ENCODE measurements at regions of chr9 and their contacts with region 1.

Region 1: GRCh38 chr9:137029058-137029936 is 1.3 kb upstream of the ABCA2 start:
- DNase-seq: peak in 1 of 2 experiments; percentile 86
- H3K4me3 ChIP-seq: no peak overlapping the region; the same call in 1 of the 2 replicates
- H3K27ac ChIP-seq: no peak overlapping the region
- H3K4me1 ChIP-seq: peaks cover 8% of the 10 kb centered on the region; the same call in 1 of the 2 replicates
- H3K27me3 ChIP-seq: no peaks in the 10 kb centered on the region
- CTCF ChIP-seq: peak; percentile 86

Region 2: GRCh38 chr9:136799854-136800657 is 229.2 kb before region 1 on chr9:
- CTCF ChIA-PET with region 1: no interaction called
- POLR2A ChIA-PET with region 1: interaction called, 13 read pairs
- intact Hi-C with region 1: no loop called
- DNase-seq: peak; percentile 81 to 91
- H3K4me3 ChIP-seq: peak overlapping the region; percentile 69
- H3K27ac ChIP-seq: no peak overlapping the region
- H3K4me1 ChIP-seq: peaks cover 21% of the 10 kb centered on the region
- H3K27me3 ChIP-seq: no peaks in the 10 kb centered on the region
- CTCF ChIP-seq: no peak

Region 3: GRCh38 chr9:136820971-136821825 is 208.1 kb before region 1 on chr9:
- CTCF ChIA-PET with region 1: interaction called, 18 read pairs
- POLR2A ChIA-PET with region 1: no interaction called
- intact Hi-C with region 1: no loop called
- DNase-seq: no peak
- H3K4me3 ChIP-seq: no peak overlapping the region
- H3K27ac ChIP-seq: no peak overlapping the region
- H3K4me1 ChIP-seq: no peaks in the 10 kb centered on the region
- H3K27me3 ChIP-seq: no peaks in the 10 kb centered on the region
- CTCF ChIP-seq: no peak

Region 4: DNA sequence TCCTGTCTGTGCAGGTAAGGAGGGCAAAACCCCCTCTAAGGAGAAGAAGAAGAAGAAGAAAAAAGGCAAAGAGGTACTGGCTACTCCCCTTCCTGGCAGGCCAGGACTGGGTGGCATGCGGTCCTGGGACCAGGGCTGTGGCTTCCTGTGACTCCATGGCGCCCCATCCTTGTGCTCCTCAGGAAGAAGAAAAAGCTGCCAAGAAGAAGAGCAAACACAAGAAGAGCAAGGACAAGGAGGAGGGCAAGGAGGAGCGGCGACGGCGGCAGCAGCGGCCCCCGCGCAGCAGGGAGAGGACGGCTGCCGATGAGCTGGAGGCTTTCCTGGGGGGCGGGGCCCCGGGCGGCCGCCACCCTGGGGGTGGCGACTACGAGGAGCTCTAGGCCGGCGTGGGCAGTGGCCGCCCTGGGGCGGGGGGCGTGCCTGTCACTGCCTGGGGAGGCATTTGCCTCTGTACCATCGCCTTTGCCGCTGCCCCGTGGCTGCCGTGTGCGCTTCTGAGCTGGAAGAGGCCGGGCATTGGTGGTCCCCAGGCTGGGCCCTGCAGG is 189.1 kb before region 1 on chr9:
- CTCF ChIA-PET with region 1: no interaction called
- POLR2A ChIA-PET with region 1: interaction called, 14 read pairs
- intact Hi-C with region 1: loop called (anchors 5 kb)
- DNase-seq: peak; percentile 46 to 51
- H3K4me3 ChIP-seq: peak overlapping the region; percentile 35; the same call in 1 of the 2 replicates
- H3K27ac ChIP-seq: no peak overlapping the region
- H3K4me1 ChIP-seq: 0 out of 2 replicates have a peak, but pooled peaks cover 2% of the 10 kb centered on the region
- H3K27me3 ChIP-seq: no peaks in the 10 kb centered on the region
- CTCF ChIP-seq: no peak

Region 5: DNA sequence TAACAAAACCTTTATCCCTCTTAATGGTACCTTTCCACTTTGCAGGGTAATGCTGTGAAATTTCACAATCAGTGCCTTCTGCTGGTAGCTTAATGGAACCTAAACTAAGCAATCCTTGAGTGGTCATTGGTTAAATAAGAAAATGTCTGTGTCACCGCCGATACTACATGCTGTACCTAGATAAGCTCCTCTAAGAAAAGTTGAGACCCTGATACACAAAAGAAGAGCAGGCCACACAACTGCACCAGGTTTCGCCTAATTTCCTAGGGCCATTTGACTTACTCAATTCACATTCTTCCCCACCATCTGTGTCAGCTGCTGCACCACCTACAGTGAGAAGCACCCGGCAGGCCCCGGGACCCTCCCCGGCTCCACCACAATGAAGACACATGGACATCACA is 154.1 kb before region 1 on chr9:
- CTCF ChIA-PET with region 1: no interaction called
- POLR2A ChIA-PET with region 1: no interaction called
- intact Hi-C with region 1: no loop called
- DNase-seq: no peak
- H3K4me3 ChIP-seq: no peak overlapping the region
- H3K27ac ChIP-seq: no peak overlapping the region
- H3K4me1 ChIP-seq: 0 out of 2 replicates have a peak, but pooled peaks cover 5% of the 10 kb centered on the region
- H3K27me3 ChIP-seq: no peaks in the 10 kb centered on the region
- CTCF ChIP-seq: no peak

Region 6: DNA sequence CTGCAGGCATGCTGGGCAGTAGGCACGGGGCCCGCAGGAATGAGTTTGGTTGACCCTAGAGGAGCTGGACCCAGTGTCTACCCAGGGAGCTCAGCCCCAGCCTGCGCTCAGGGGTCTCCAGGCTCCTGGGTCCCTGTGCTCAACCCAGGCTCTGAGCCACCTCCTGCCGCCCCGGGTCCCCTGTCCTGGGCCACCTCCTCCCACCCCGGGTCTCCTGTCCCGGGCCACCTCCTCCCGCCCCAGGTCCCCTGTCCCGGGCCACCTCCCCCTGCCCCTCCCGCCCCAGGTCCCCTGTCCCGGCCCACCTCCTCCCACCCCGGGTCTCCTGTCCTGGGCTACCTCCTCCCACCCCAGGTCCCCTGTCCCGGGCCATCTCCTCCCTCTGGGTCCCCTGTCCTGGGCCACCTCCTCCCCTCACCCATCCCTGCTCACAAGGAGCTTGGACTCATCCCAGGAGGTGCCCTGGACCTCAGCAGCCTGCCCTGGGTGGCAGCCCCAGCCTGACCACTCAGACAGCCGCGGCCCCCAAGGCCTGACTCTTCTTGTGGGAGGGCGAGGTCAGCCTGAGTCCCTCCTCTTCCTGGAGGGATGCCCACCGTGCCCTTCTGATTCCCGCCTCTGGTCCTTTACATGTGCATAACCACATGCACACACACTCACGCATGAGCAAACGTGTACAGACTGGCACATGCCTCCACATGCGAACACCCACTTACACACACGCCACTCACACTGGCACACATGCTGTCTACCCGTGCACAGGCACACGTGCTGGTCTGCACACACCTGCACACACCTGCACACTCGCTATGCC is 74.8 kb before region 1 on chr9:
- CTCF ChIA-PET with region 1: no interaction called
- POLR2A ChIA-PET with region 1: no interaction called
- intact Hi-C with region 1: no loop called
- DNase-seq: no peak
- H3K4me3 ChIP-seq: no peak overlapping the region
- H3K27ac ChIP-seq: no peak overlapping the region
- H3K4me1 ChIP-seq: peaks cover 6% of the 10 kb centered on the region; the same call in 1 of the 2 replicates
- H3K27me3 ChIP-seq: no peaks in the 10 kb centered on the region
- CTCF ChIP-seq: no peak

Region 7: DNA sequence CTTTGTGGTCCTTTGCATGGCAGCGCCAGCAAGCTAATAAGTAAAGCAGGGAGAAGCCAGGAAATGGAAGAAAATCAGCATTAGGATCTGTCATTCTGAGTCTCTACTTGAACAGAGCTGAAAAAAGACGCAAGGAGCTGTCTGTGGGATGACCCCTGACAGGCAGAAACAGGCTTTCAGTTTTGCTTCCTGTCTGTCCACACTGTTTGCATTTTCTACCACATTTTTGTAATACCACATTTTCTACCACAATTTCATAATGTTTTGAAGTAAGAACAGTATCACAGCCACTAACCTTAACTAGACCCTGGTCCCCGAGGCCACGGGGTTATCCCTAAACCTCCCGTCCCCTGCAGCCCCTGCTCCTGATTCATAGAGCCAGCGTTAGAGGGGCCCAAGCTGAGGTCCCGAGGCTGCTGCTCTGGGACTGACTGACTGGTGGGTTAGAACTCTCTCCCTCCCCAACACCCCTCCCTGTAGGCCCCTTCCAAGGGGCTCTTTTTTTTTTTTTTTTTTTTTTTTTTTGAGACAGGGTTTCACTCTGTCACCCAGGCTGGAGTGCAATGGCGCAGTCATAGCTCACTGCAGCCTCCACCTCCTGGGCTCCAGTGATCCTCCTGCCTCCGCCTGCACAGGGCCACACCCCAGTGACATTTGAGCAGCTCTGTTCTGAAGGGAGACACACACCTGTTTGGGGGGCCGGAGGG is 29.0 kb before region 1 on chr9:
- CTCF ChIA-PET with region 1: interaction called, 13 read pairs
- POLR2A ChIA-PET with region 1: no interaction called
- intact Hi-C with region 1: no loop called
- DNase-seq: no peak
- H3K4me3 ChIP-seq: no peak overlapping the region
- H3K27ac ChIP-seq: no peak overlapping the region
- H3K4me1 ChIP-seq: peaks cover 30% of the 10 kb centered on the region
- H3K27me3 ChIP-seq: no peaks in the 10 kb centered on the region
- CTCF ChIP-seq: no peak

Region 8: GRCh38 chr9:137168905-137169856 is 139.9 kb after region 1 on chr9:
- CTCF ChIA-PET with region 1: no interaction called
- POLR2A ChIA-PET with region 1: no interaction called
- intact Hi-C with region 1: no loop called
- DNase-seq: peak; percentile 66 to 80
- H3K4me3 ChIP-seq: peak overlapping the region; percentile 75
- H3K27ac ChIP-seq: no peak overlapping the region
- H3K4me1 ChIP-seq: peaks cover 13% of the 10 kb centered on the region; the same call in 1 of the 2 replicates
- H3K27me3 ChIP-seq: no peaks in the 10 kb centered on the region
- CTCF ChIP-seq: no peak